HepG2 (cell line): ENCODE measurements at regions of chr20 and their contacts with region 1.

Region 1: DNA sequence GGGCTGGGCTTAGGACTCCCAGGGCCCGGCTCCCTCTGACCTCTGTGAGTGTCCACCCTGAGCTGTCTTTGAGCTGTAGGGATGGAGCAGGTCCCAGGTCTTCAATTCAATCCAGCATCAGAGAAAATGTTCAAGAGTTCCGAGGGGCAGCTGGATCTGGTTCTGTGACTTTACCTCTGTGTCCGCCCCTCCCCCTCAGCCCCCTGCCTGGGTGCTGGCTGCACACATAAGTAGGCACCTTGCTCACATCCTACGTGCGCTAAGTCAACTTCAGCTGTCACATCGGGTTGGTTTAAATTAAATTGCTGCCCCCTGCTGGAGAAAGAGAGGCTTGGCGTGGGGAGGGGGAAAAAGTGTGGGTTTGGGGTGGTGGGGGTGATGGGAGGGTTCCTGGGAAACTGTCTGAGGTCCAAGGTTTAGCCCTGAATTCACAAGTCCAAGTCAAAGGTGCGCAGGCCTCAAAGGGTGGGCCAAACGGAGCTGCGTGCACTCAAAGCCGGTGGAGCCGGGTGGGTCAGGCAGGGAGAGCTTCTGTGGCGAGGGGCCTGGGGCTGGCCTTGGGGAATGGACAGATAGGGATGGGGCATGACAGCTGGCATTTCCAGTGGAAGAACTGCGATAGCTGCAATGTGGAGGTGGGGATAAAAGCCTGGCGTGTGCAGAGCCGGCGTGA is 3.0 kb downstream of the WFDC5 start:
- DNase-seq: peak; percentile 56
- ATAC-seq: peak; percentile 60
- H3K4me3 ChIP-seq: peak overlapping the region in 1 of 3 experiments; percentile 3; a peak in 1 of 6 replicates
- H3K27ac ChIP-seq: no peak overlapping the region
- H3K4me1 ChIP-seq: peaks cover 10% of the 10 kb centered on the region
- H3K27me3 ChIP-seq: peaks cover 10 to 35% of the 10 kb centered on the region in 2 experiments; a peak in 2 of 5 replicates
- CTCF ChIP-seq: peak; percentile 79
- EP300 ChIP-seq: no peak
- POLR2A ChIP-seq: no peak
- RAD21 ChIP-seq: no peak

Region 2: GRCh38 chr20:45011108-45011526 is 100.8 kb before region 1 on chr20:
- CTCF ChIA-PET with region 1: interaction called, 8 read pairs
- POLR2A ChIA-PET with region 1: no interaction called
- in situ Hi-C with region 1: no loop called
- intact Hi-C with region 1: loop called (anchors 5 kb)
- DNase-seq: peak; percentile 49
- ATAC-seq: peak; percentile 87
- H3K4me3 ChIP-seq: no peak overlapping the region
- H3K27ac ChIP-seq: no peak overlapping the region
- H3K4me1 ChIP-seq: peaks cover 9% of the 10 kb centered on the region; the same call in 1 of the 2 replicates
- H3K27me3 ChIP-seq: no peaks in the 10 kb centered on the region
- CTCF ChIP-seq: peak; percentile 80
- EP300 ChIP-seq: no peak
- POLR2A ChIP-seq: no peak
- RAD21 ChIP-seq: peak; percentile 54; the same call in 1 of the 2 replicates

Region 3: DNA sequence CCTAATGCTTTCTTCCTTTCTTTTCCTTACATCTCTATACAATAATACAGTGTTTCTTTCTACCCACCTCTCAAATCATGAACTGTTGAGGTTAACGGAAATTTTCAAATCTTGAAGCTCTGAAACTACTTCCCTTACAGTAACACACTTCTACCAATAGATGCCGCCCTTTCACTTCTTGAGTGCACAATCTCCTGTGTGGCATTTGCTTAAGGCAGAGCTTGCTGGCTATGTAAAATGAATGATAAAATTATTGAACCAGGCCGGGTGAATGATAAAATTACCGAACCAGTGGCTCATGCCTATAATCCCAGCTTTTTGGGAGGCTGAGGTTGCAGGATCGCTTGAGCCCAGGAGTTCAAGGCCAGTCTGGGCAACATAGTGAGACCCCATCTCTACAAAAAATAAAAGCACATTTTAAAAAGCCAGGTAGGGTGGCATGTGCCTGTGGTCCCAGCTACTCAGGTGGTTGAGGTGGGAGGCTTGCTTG is 67.8 kb before region 1 on chr20:
- CTCF ChIA-PET with region 1: interaction called, 20 read pairs
- POLR2A ChIA-PET with region 1: no interaction called
- in situ Hi-C with region 1: no loop called
- intact Hi-C with region 1: loop called (anchors 1 kb)
- DNase-seq: peak; percentile 82
- ATAC-seq: peak; percentile 84
- H3K4me3 ChIP-seq: no peak overlapping the region
- H3K27ac ChIP-seq: no peak overlapping the region
- H3K4me1 ChIP-seq: no peaks in the 10 kb centered on the region
- H3K27me3 ChIP-seq: no peaks in the 10 kb centered on the region; a peak in 1 of 5 replicates
- CTCF ChIP-seq: peak; percentile 95
- EP300 ChIP-seq: no peak
- POLR2A ChIP-seq: no peak
- RAD21 ChIP-seq: peak; percentile 84

Region 4: GRCh38 chr20:45157962-45158361 is 46.0 kb after region 1 on chr20:
- CTCF ChIA-PET with region 1: no interaction called
- POLR2A ChIA-PET with region 1: no interaction called
- in situ Hi-C with region 1: no loop called
- intact Hi-C with region 1: no loop called
- DNase-seq: no peak
- ATAC-seq: no peak
- H3K4me3 ChIP-seq: no peak overlapping the region
- H3K27ac ChIP-seq: no peak overlapping the region
- H3K4me1 ChIP-seq: no peaks in the 10 kb centered on the region
- H3K27me3 ChIP-seq: no peaks in the 10 kb centered on the region
- CTCF ChIP-seq: no peak
- EP300 ChIP-seq: no peak
- POLR2A ChIP-seq: no peak
- RAD21 ChIP-seq: no peak

Region 5: DNA sequence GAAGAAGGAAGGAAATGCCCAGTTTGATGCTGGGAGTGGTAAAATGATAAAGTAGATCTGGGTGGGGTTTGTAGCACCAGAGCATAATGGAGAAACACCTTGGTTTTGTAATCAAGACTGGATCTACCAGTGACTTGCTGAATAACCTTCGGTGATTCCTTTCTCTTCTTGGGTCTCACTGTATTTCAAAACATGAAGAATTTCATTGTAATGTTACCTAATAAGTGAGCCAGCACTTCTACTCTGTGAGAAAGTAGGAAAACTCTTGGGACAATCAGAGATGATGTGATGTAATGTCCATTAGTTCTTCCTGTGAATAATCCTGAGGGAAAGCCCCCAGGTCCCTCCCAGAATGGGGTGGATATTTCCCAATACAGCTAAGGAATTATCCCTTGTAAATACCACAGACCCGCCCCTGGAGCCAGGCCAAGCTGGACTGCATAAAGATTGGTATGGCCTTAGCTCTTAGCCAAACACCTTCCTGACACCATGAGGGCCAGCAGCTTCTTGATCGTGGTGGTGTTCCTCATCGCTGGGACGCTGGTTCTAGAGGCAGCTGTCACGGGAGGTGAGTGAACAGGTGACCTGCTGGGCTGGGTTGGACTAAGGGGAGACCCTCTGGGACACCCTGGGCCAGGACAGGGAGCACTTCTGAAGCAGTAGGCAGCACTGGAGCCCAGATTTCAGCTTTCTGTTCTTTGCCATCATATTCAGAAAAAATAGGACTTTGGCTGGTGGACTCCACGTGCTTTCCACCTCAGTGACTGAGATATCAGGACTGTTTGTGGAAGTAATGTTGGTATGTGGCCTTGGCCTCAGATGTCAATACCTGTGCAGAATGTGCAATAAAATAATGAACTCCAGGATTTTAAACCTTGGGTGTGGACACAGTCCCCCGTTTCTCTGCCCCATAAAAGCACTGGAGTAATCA is 62.8 kb after region 1 on chr20 and contains the start of gene PI3:
- CTCF ChIA-PET with region 1: no interaction called
- POLR2A ChIA-PET with region 1: no interaction called
- in situ Hi-C with region 1: no loop called
- intact Hi-C with region 1: no loop called
- DNase-seq: peak; percentile 38
- ATAC-seq: peak; percentile 74
- H3K4me3 ChIP-seq: no peak within 1 kb of the TSS
- H3K27ac ChIP-seq: no peak within 1 kb of the TSS
- H3K4me1 ChIP-seq: peaks cover 10% of the 10 kb centered on the region
- H3K27me3 ChIP-seq: peaks cover 0 to 15% of the 10 kb centered on the region in 2 experiments; a peak in 1 of 5 replicates
- CTCF ChIP-seq: no peak
- EP300 ChIP-seq: no peak
- POLR2A ChIP-seq: no peak
- RAD21 ChIP-seq: no peak
- total RNA-seq, gene PI3: 0.22 TPM in 1 of 2 replicates, not detected in the other

Region 6: DNA sequence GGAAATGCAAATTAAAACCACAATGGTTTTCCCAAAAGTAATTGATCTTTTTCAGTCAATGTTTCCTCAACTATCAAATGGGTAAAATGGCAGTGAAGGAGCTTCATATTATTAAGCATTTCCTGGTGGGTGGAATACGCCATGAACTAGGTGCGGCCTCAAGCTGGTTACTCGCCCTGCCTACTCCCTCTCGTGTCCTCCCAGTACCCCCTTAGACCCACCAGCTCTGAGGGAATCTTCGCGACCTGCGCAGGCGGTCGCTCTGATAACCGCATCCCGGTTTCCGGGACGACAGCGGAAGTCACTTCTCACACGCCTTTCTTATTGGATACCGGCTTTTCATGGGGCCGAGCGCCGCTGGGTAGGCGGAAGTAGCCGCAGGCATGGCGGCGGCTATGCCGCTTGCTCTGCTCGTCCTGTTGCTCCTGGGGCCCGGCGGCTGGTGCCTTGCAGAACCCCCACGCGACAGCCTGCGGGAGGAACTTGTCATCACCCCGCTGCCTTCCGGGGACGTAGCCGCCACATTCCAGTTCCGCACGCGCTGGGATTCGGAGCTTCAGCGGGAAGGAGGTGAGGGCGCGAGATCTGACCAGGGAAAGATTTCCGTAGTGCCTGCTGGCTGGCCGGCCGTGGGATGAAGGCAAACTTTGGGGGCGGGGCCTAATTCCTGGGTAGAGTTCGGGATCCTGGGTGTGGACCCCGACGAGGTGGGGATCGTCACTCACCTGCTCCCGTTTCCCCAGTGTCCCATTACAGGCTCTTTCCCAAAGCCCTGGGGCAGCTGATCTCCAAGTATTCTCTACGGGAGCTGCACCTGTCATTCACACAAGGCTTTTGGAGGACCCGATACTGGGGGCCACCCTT is 304.1 kb after region 1 on chr20 and contains the start of gene PIGT:
- CTCF ChIA-PET with region 1: no interaction called
- POLR2A ChIA-PET with region 1: no interaction called
- in situ Hi-C with region 1: no loop called
- intact Hi-C with region 1: no loop called
- DNase-seq: peak; percentile 93
- ATAC-seq: peak; percentile 99
- H3K4me3 ChIP-seq: peak within 1 kb of the TSS; percentile 84 to 97 (median 86)
- H3K27ac ChIP-seq: peak within 1 kb of the TSS; percentile 62
- H3K4me1 ChIP-seq: peaks cover 31% of the 10 kb centered on the region
- H3K27me3 ChIP-seq: no peaks in the 10 kb centered on the region; a peak in 1 of 5 replicates
- CTCF ChIP-seq: peak; percentile 38; the same call in 1 of the 2 replicates
- EP300 ChIP-seq: peak; percentile 40 to 46; a peak in 2 of 4 replicates
- POLR2A ChIP-seq: peak; percentile 93 to 98
- RAD21 ChIP-seq: peak; percentile 82
- total RNA-seq, gene PIGT: 26.4 and 65.9 TPM in 2 replicates